SK-N-SH (cell line): ENCODE measurements at regions of chr2 and their contacts with region 1.

Region 1: GRCh38 chr2:43226558-43226954 is at the start of gene ZFP36L2:
- DNase-seq: peak; percentile 99
- H3K4me3 ChIP-seq: peak within 1 kb of the TSS; percentile 95 to 97
- H3K27ac ChIP-seq: peak within 1 kb of the TSS; percentile 94 to 95
- H3K4me1 ChIP-seq: peaks cover 19 to 53% of the 10 kb centered on the region in 2 experiments
- H3K27me3 ChIP-seq: no peaks in the 10 kb centered on the region
- CTCF ChIP-seq: no peak
- EP300 ChIP-seq: 0 out of 4 replicates have a peak, but pooled peaks of 1 of the 2 experiments have one; percentile 3
- RAD21 ChIP-seq: no peak
- polyA plus RNA-seq, gene ZFP36L2: 12.5 and 18.4 TPM in 2 replicates

Region 2: GRCh38 chr2:42917425-42917927 is 309.1 kb before region 1 on chr2:
- CTCF ChIA-PET with region 1: no interaction called
- POLR2A ChIA-PET with region 1: no interaction called
- DNase-seq: no peak
- H3K4me3 ChIP-seq: no peak overlapping the region
- H3K27ac ChIP-seq: no peak overlapping the region
- H3K4me1 ChIP-seq: peaks cover 2 to 3% of the 10 kb centered on the region in 2 experiments; a peak in 2 of 4 replicates
- H3K27me3 ChIP-seq: no peaks in the 10 kb centered on the region
- CTCF ChIP-seq: no peak
- EP300 ChIP-seq: no peak
- RAD21 ChIP-seq: no peak

Region 3: DNA sequence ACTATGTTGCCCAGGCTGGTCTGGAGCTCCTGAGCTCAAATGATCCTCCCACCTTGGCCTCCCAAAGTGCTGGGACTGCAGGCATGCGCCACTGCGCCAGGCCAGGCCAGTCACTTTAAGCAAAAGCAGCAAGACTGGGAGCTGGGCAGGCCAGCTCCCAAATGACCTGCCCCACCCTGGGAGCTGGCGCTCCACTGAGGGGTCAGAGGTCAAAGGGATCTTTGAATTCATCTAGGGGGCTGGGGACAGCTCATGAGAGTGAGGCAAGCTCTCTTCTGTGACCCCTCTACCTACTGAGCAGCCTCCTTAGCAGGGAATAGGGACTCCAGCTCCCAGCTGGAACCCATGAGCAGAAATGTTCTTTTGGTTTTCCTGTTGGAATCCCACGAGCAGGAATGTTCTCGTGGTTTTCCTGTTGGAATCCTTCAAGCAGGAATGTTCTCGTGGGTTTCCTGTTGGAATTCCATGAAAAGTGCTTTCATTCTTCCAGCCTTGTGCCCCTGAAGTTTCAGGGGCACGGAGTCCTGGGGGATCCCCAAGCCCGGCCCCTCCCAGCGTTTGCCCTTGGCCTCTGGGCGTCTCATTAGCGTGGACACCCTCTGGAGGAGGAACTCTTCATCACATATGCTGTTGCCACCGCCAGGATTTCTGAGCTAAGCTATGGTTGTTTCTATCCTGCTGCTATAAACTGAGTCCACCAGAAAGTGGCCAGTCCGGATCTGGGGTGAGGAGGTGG is 272.2 kb before region 1 on chr2:
- CTCF ChIA-PET with region 1: interaction called, 10 read pairs
- POLR2A ChIA-PET with region 1: interaction called, 3 read pairs
- DNase-seq: no peak
- H3K4me3 ChIP-seq: no peak overlapping the region
- H3K27ac ChIP-seq: peak overlapping the region in 1 of 2 experiments; percentile 64; a peak in 2 of 4 replicates
- H3K4me1 ChIP-seq: peaks cover 0 to 21% of the 10 kb centered on the region in 2 experiments; a peak in 2 of 4 replicates
- H3K27me3 ChIP-seq: no peaks in the 10 kb centered on the region
- CTCF ChIP-seq: no peak
- EP300 ChIP-seq: peak in 1 of 2 experiments; percentile 37; a peak in 1 of 4 replicates
- RAD21 ChIP-seq: no peak

Region 4: GRCh38 chr2:43010438-43011157 is 216.0 kb before region 1 on chr2:
- CTCF ChIA-PET with region 1: interaction called, 22 read pairs
- POLR2A ChIA-PET with region 1: interaction called, 4 read pairs
- DNase-seq: no peak
- H3K4me3 ChIP-seq: no peak overlapping the region
- H3K27ac ChIP-seq: no peak overlapping the region
- H3K4me1 ChIP-seq: peaks cover 0 to 5% of the 10 kb centered on the region in 2 experiments; a peak in 1 of 4 replicates
- H3K27me3 ChIP-seq: no peaks in the 10 kb centered on the region
- CTCF ChIP-seq: no peak
- EP300 ChIP-seq: no peak
- RAD21 ChIP-seq: no peak

Region 5: GRCh38 chr2:43083710-43084698 is 142.6 kb before region 1 on chr2:
- CTCF ChIA-PET with region 1: interaction called, 21 read pairs
- POLR2A ChIA-PET with region 1: interaction called, 13 read pairs
- DNase-seq: peak; percentile 75
- H3K4me3 ChIP-seq: 0 out of 4 replicates have a peak overlapping the region, but pooled peaks of 1 of the 2 experiments have one; percentile 7
- H3K27ac ChIP-seq: peak overlapping the region; percentile 89 to 98
- H3K4me1 ChIP-seq: peaks cover 58 to 67% of the 10 kb centered on the region in 2 experiments
- H3K27me3 ChIP-seq: no peaks in the 10 kb centered on the region
- CTCF ChIP-seq: no peak
- EP300 ChIP-seq: peak in 1 of 2 experiments; percentile 62; a peak in 2 of 4 replicates
- RAD21 ChIP-seq: no peak; the same call in 1 of the 2 replicates

Region 6: DNA sequence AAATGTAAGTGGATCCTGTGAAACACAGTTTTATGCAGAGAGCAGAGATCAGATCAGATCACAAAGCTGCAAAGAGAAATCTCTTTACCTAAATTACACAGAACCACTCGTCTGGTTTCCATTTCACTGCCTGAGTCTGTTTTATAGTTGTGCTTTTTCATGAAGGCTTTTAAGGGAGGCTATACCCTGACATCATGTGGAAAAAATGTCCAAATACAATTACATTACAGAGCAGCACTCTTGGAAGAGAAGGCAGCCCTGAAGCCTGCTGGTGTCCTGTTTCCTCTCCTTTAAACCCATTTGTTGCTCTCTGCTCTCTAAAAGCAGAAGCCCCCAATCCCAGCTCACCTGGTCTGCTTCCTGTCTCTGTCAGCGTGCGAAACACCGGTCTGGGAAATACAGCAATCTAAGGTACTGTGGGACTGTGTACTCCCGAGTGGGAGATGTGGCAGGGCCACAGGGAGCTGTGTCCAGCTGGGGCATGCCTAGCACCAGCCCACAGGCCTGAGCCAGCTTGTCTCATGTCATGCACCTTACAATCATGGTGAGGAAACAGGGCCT is 24.7 kb after region 1 on chr2:
- CTCF ChIA-PET with region 1: interaction called, 67 read pairs
- POLR2A ChIA-PET with region 1: interaction called, 24 read pairs
- DNase-seq: peak; percentile 80
- H3K4me3 ChIP-seq: no peak overlapping the region
- H3K27ac ChIP-seq: peak overlapping the region; percentile 77 to 100
- H3K4me1 ChIP-seq: peaks cover 9 to 53% of the 10 kb centered on the region in 2 experiments; a peak in 2 of 4 replicates
- H3K27me3 ChIP-seq: no peaks in the 10 kb centered on the region
- CTCF ChIP-seq: no peak; the same call in 1 of the 2 replicates
- EP300 ChIP-seq: peak; percentile 74 to 97; a peak in 3 of 4 replicates
- RAD21 ChIP-seq: peak; percentile 63

Region 7: DNA sequence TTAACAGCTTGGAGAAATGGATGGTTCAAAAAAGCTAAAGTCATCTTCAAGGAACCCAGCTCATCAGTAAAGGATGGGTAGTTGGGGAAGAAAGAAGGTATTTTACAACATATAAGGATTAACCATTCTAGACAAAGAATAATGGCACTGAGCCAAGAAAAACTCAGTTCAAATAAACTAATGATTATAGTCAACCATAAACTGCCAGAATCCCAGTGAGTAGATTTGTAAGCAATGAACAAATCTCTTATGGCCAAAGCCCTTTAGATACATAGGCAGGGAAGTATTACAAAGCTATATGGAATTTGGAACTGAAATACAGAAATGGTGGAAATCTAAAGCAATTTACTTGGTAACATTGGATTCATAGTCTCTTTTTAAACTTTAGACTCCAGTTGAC is 92.2 kb after region 1 on chr2:
- CTCF ChIA-PET with region 1: interaction called, 16 read pairs
- POLR2A ChIA-PET with region 1: interaction called, 3 read pairs
- DNase-seq: no peak
- H3K4me3 ChIP-seq: no peak overlapping the region
- H3K27ac ChIP-seq: peak overlapping the region; percentile 58 to 99
- H3K4me1 ChIP-seq: peaks cover 23 to 36% of the 10 kb centered on the region in 2 experiments
- H3K27me3 ChIP-seq: no peaks in the 10 kb centered on the region
- CTCF ChIP-seq: no peak
- EP300 ChIP-seq: no peak
- RAD21 ChIP-seq: no peak

Region 8: GRCh38 chr2:43542285-43542937 is 315.9 kb after region 1 on chr2:
- CTCF ChIA-PET with region 1: interaction called, 85 read pairs
- POLR2A ChIA-PET with region 1: no interaction called
- DNase-seq: peak; percentile 52
- H3K4me3 ChIP-seq: no peak overlapping the region
- H3K27ac ChIP-seq: peak overlapping the region in 1 of 2 experiments; percentile 28; a peak in 1 of 4 replicates
- H3K4me1 ChIP-seq: peaks cover 8 to 13% of the 10 kb centered on the region in 2 experiments
- H3K27me3 ChIP-seq: no peaks in the 10 kb centered on the region
- CTCF ChIP-seq: peak; percentile 78
- EP300 ChIP-seq: no peak
- RAD21 ChIP-seq: peak; percentile 81

Region 9: DNA sequence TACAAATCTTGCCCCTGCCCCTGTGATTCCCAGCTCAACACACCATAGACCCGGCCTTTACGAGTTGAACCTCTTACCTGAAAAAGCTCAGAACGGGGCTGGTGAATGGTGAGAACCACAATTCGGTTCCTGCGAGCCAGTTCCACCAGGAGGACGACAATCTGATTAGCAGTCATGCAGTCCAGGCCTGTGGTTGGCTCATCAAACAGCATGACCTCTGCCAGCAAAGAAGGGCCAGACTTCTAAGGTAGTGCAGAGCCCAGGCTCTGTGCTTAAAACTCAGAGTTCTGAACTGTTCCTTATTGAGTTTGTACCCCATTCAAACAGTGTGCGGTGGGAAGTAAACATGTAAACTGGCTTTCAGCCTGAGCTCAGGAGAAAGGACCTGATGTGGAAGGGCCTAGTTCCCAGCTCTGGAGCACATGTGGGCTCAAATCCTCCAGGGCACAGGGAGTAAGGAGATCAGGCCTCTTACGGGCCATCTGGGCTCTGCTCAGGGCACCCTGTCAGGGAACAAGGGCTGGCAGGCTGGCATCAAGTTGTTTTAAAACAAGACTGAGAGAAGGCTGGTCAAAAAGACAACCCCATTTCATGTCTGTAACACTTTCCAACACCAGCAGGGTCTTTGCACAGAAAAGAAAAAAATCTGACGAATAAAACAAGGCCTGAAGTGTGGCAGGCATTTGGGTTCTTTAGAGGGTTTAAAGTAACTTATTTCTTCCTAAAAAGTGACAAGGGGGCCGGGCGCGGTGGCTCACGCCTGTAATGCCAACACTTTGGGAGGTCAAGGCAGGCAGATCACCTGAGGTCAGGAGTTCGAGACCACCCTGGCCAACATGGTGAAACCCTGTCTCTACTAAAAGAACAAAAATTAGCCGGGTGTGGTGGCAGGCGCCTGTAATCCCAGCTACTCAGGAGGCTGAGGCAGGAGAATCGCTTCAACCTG is 600.0 kb after region 1 on chr2:
- CTCF ChIA-PET with region 1: no interaction called
- POLR2A ChIA-PET with region 1: no interaction called
- DNase-seq: no peak
- H3K4me3 ChIP-seq: no peak overlapping the region
- H3K27ac ChIP-seq: no peak overlapping the region
- H3K4me1 ChIP-seq: peaks cover 0 to 6% of the 10 kb centered on the region in 2 experiments; a peak in 1 of 4 replicates
- H3K27me3 ChIP-seq: no peaks in the 10 kb centered on the region; the same call in 1 of the 2 replicates
- CTCF ChIP-seq: no peak
- EP300 ChIP-seq: no peak
- RAD21 ChIP-seq: no peak